Prostate gland (tissue), 2 donors: ENCODE measurements at regions of chr6 and their contacts with region 1.

Region 1: DNA sequence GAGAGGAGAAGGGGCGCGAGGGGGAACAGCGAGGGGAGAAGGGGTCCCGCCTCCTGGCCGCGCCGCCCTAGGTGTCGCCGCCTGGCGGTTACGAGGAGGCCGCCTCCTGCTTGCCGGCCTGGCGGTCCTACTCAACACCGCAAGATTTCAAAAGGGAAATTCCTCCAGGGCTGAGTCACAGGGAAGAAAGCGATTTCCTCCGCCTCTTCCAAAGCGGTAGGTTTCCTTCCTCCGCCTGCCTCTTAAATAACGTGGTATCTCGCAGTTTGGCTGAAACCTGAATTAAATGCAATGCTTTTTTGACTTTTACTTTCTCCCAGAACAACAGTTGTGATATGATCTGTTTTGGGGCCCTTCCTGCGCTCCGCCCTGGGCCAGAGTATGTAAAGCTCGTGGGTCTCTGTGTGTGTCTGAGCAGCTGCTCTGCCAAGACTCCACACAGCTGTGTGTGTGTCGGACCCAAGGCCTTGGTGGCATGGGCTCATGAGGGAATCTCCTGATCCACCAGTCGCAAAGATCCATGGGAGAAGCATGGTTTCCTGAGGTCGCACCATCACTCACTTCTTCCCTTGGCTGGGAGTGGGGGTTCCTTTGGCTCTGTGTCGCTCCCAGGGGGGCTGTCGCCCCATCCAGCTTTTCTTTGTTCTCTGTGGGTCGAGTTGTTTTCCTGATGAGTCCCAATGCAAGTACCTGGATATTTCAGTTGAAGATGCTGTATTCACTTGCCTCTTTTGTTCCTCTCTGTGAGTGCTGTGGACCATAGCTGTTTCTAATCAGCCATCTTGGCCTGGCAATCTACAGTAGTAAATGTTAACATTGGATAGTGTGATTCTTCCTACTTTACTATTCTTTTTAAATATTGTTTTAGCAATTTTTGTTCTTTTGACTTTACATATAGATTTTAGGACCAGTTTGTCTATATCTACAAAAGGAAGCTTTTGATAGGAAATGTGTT is 31.6 kb upstream of the NOTCH4 start:
- DNase-seq: peak; percentile 67
- H3K4me3 ChIP-seq: peak overlapping the region; percentile 27 to 29
- H3K27ac ChIP-seq: peak overlapping the region; percentile 71
- H3K4me1 ChIP-seq: no peaks in the 10 kb centered on the region
- H3K27me3 ChIP-seq: no peaks in the 10 kb centered on the region
- CTCF ChIP-seq: peak; percentile 39 to 63 (median 58)
- POLR2A ChIP-seq: no peak

Region 2: GRCh38 chr6:32369675-32370074 is 114.2 kb after region 1 on chr6:
- intact Hi-C with region 1: no loop called
- DNase-seq: no peak
- H3K4me3 ChIP-seq: no peak overlapping the region
- H3K27ac ChIP-seq: no peak overlapping the region
- H3K4me1 ChIP-seq: no peaks in the 10 kb centered on the region
- H3K27me3 ChIP-seq: no peaks in the 10 kb centered on the region
- CTCF ChIP-seq: no peak
- POLR2A ChIP-seq: no peak

Region 3: DNA sequence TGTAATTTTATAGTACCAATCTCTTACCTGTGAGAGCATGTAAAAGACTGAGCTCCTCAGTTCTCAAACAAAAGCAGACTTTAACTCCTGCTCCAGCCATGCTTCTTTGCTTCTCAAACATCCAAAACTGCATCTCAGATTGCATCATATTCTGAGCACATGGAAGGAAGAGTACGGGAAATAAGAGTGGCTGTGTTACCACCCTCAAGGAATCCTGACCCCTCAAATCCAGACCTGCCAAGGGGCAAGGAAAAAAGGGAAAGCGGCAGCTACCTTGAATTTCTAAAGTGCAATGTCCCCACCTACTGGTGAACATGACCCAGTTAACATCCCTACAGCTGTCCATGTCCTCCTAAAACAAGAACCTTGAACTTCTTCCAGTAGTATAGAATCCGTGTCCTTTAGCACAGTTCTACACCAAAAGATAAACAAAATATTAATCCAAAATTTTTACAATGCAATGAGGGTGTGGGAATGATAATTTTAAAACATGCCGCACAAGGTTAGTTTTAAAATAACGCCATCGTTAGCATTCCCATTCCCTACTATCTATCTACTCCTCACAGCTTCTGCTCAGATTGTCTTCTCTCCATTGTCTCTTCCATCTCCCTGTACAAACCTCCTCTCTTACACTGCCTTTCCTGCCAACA is 445.0 kb after region 1 on chr6:
- intact Hi-C with region 1: loop called (anchors 10 kb)
- DNase-seq: peak; percentile 28
- H3K4me3 ChIP-seq: no peak overlapping the region
- H3K27ac ChIP-seq: no peak overlapping the region
- H3K4me1 ChIP-seq: no peaks in the 10 kb centered on the region
- H3K27me3 ChIP-seq: no peaks in the 10 kb centered on the region
- CTCF ChIP-seq: peak in 3 of 4 experiments; percentile 56 to 58 (median 58)
- POLR2A ChIP-seq: no peak